CD8-positive, alpha-beta memory T cell (primary cell): ENCODE measurements at regions of chr17 and their contacts with region 1.

Region 1: GRCh38 chr17:4966844-4967538 is 626 bp downstream of the SPAG7 start:
- DNase-seq: peak; percentile 90 to 98 (median 97)
- H3K4me3 ChIP-seq: peak overlapping the region; percentile 100
- H3K4me3 Mint-ChIP-seq: no peak overlapping the region
- H3K27ac ChIP-seq: peak overlapping the region; percentile 76
- H3K27ac Mint-ChIP-seq: peak overlapping the region in 2 of 8 donors; percentile 8 to 80
- H3K4me1 ChIP-seq: peaks cover 20% of the 10 kb centered on the region
- H3K4me1 Mint-ChIP-seq: peaks cover 16 to 20% (median 20%) of the 10 kb centered on the region in 3 donors
- H3K27me3 ChIP-seq: no peaks in the 10 kb centered on the region
- H3K27me3 Mint-ChIP-seq: no peaks in the 10 kb centered on the region

Region 2: GRCh38 chr17:4908301-4908700 is 58.7 kb before region 1 on chr17:
- CTCF ChIA-PET with region 1: interaction called, 20 read pairs
- POLR2A ChIA-PET with region 1: interaction called, 6 read pairs
- DNase-seq: peak in 1 of 5 donors; percentile 47
- H3K4me3 ChIP-seq: no peak overlapping the region
- H3K4me3 Mint-ChIP-seq: no peak overlapping the region
- H3K27ac ChIP-seq: no peak overlapping the region
- H3K27ac Mint-ChIP-seq: no peak overlapping the region
- H3K4me1 ChIP-seq: peaks cover 24% of the 10 kb centered on the region
- H3K4me1 Mint-ChIP-seq: peaks cover 5 to 12% (median 5%) of the 10 kb centered on the region in 3 donors
- H3K27me3 ChIP-seq: no peaks in the 10 kb centered on the region
- H3K27me3 Mint-ChIP-seq: no peaks in the 10 kb centered on the region

Region 3: DNA sequence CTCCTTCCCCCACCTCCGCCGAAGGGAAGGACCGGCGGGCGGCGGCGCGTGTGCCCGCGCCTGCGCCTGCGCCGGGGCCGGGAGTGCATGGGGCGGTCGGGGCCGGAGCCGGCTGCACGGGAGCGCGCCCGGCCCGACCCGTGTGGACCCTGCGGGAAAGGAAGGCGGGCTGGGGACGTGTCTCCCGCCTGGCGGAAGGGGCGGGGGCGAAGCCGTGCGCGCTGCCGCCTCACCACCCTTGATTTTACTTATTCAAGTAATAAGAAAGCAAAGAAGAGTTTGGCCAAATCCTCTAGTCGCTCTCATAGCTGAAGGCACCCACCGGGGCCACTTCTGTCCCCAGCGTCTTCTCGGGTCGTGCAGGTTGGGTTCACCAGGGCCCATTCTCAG is 18.1 kb before region 1 on chr17:
- CTCF ChIA-PET with region 1: interaction called, 30 read pairs
- POLR2A ChIA-PET with region 1: interaction called, 187 read pairs
- DNase-seq: peak; percentile 59 to 85 (median 78)
- H3K4me3 ChIP-seq: peak overlapping the region; percentile 97
- H3K4me3 Mint-ChIP-seq: peak overlapping the region; percentile 94 to 100 (median 97)
- H3K27ac ChIP-seq: peak overlapping the region; percentile 86
- H3K27ac Mint-ChIP-seq: peak overlapping the region; percentile 92 to 100 (median 97)
- H3K4me1 ChIP-seq: peaks cover 37% of the 10 kb centered on the region
- H3K4me1 Mint-ChIP-seq: peaks cover 38 to 48% (median 46%) of the 10 kb centered on the region in 3 donors
- H3K27me3 ChIP-seq: no peaks in the 10 kb centered on the region
- H3K27me3 Mint-ChIP-seq: peaks cover 0 to 5% of the 10 kb centered on the region in 2 donors

Region 4: DNA sequence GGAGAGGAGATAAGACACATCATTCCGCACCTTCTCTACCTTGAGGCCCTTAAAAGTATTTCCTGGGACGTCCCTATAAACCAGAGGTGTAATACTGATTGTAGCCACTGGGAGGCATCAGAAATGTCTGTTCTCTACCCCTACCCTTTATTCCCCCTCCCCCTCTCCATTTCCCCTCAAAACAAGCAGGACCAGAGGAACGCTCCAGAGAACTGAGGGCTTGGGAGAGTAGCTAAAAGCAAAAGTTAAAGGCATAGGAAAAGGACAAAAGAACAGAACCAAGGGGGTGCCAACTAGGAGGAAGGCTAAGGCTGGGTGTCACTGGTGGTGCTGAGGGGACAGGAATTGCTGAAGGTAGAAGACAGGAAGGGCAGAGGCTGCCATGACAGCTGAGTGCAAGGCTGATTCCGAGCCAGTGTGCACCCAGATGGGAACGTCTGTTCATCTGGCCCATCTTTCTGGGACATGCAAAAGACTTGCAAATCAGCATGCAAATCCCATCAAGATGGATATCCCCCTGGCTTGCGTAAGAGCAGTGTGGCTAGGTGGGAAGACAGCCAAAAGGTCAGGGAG is 13.7 kb after region 1 on chr17:
- CTCF ChIA-PET with region 1: interaction called, 13 read pairs
- POLR2A ChIA-PET with region 1: interaction called, 3 read pairs
- DNase-seq: peak in 3 of 5 donors; percentile 26 to 59 (median 48)
- H3K4me3 ChIP-seq: no peak overlapping the region
- H3K4me3 Mint-ChIP-seq: peak overlapping the region in 1 of 7 donors; percentile 33
- H3K27ac ChIP-seq: no peak overlapping the region
- H3K27ac Mint-ChIP-seq: peak overlapping the region; percentile 55 to 89 (median 78)
- H3K4me1 ChIP-seq: peaks cover 11% of the 10 kb centered on the region
- H3K4me1 Mint-ChIP-seq: peaks cover 12 to 21% (median 19%) of the 10 kb centered on the region in 3 donors
- H3K27me3 ChIP-seq: no peaks in the 10 kb centered on the region
- H3K27me3 Mint-ChIP-seq: no peaks in the 10 kb centered on the region

Region 5: GRCh38 chr17:4997302-4998026 is 30.5 kb after region 1 on chr17 and contains the starts of genes INCA1 and KIF1C:
- CTCF ChIA-PET with region 1: interaction called, 4 read pairs
- POLR2A ChIA-PET with region 1: interaction called, 18 read pairs
- DNase-seq: peak; percentile 84 to 93 (median 91)
- H3K4me3 ChIP-seq: peak within 1 kb of the TSS; percentile 61
- H3K4me3 Mint-ChIP-seq: peak within 1 kb of the TSS; percentile 80 to 88 (median 84)
- H3K27ac ChIP-seq: peak within 1 kb of the TSS; percentile 51
- H3K27ac Mint-ChIP-seq: peak within 1 kb of the TSS; percentile 75 to 95 (median 87)
- H3K4me1 ChIP-seq: peaks cover 21% of the 10 kb centered on the region
- H3K4me1 Mint-ChIP-seq: peaks cover 18 to 33% (median 26%) of the 10 kb centered on the region in 3 donors
- H3K27me3 ChIP-seq: no peaks in the 10 kb centered on the region
- H3K27me3 Mint-ChIP-seq: no peaks in the 10 kb centered on the region
- total RNA-seq, gene INCA1: 0.18 to 0.37 TPM
- total RNA-seq, gene KIF1C: 73.4 to 77.3 TPM

Region 6: GRCh38 chr17:5019475-5019956 is 52.5 kb after region 1 on chr17:
- CTCF ChIA-PET with region 1: no interaction called
- POLR2A ChIA-PET with region 1: no interaction called
- DNase-seq: peak in 3 of 5 donors; percentile 35 to 69 (median 49)
- H3K4me3 ChIP-seq: no peak overlapping the region
- H3K4me3 Mint-ChIP-seq: no peak overlapping the region
- H3K27ac ChIP-seq: no peak overlapping the region
- H3K27ac Mint-ChIP-seq: peak overlapping the region in 3 of 8 donors; percentile 18 to 89 (median 26)
- H3K4me1 ChIP-seq: no peaks in the 10 kb centered on the region
- H3K4me1 Mint-ChIP-seq: peaks cover 0 to 8% (median 0%) of the 10 kb centered on the region in 3 donors
- H3K27me3 ChIP-seq: no peaks in the 10 kb centered on the region
- H3K27me3 Mint-ChIP-seq: no peaks in the 10 kb centered on the region

Region 7: GRCh38 chr17:5198472-5198871 is 231.5 kb after region 1 on chr17:
- CTCF ChIA-PET with region 1: no interaction called
- POLR2A ChIA-PET with region 1: no interaction called
- DNase-seq: peak in 1 of 5 donors; percentile 8
- H3K4me3 ChIP-seq: no peak overlapping the region
- H3K4me3 Mint-ChIP-seq: peak overlapping the region in 3 of 7 donors; percentile 20 to 68 (median 41)
- H3K27ac ChIP-seq: no peak overlapping the region
- H3K27ac Mint-ChIP-seq: peak overlapping the region in 6 of 8 donors; percentile 32 to 75 (median 66)
- H3K4me1 ChIP-seq: peaks cover 8% of the 10 kb centered on the region
- H3K4me1 Mint-ChIP-seq: peaks cover 14 to 18% (median 15%) of the 10 kb centered on the region in 3 donors
- H3K27me3 ChIP-seq: no peaks in the 10 kb centered on the region
- H3K27me3 Mint-ChIP-seq: no peaks in the 10 kb centered on the region